ENCODE measurements at regions of chr10 and their contacts with region 1.

Region 1: GRCh38 chr10:32980558-32981468 is 22.8 kb upstream of the ITGB1 start:
- DNase-seq: peak; percentile 96 to 99 (median 98)
- H3K4me3 ChIP-seq: peak overlapping the region; percentile 55 to 77 (median 60)
- H3K4me3 Mint-ChIP-seq: peak overlapping the region; percentile 83 to 98
- H3K27ac ChIP-seq: peak overlapping the region; percentile 83 to 92
- H3K27ac Mint-ChIP-seq: peak overlapping the region; percentile 93 to 98 (median 97)
- H3K4me1 ChIP-seq: peaks cover 24 to 27% of the 10 kb centered on the region in 2 donors
- H3K4me1 Mint-ChIP-seq: peaks cover 44% of the 10 kb centered on the region
- H3K27me3 ChIP-seq: no peaks in the 10 kb centered on the region
- H3K27me3 Mint-ChIP-seq: peaks cover 1 to 7% (median 3%) of the 10 kb centered on the region in 3 donors
- CTCF ChIP-seq: no peak

Region 2: DNA sequence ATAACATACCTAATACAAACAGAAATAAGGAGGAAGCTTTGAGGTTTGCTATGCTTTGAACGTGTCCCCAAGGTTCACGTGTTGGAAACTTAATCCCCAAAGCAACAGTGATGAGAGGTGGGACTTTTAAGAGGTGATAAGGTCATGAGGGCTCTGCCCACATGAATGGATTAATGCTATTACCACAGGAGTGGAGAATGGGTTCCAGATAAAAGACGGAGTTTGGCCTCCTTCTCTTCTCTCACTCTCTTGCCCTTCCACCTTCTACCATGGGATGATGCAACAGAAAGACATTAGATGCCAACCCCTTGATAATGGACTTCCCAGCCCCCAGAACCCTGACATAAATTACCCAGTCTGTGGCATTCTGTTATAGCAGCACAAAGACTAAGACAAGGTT is 32.4 kb before region 1 on chr10:
- intact Hi-C with region 1: loop called in 1 of 2 experiments (anchors 5 kb)
- DNase-seq: no peak
- H3K4me3 ChIP-seq: no peak overlapping the region
- H3K4me3 Mint-ChIP-seq: no peak overlapping the region
- H3K27ac ChIP-seq: no peak overlapping the region
- H3K27ac Mint-ChIP-seq: no peak overlapping the region
- H3K4me1 ChIP-seq: peaks cover 8 to 14% of the 10 kb centered on the region in 2 donors
- H3K4me1 Mint-ChIP-seq: peaks cover 45% of the 10 kb centered on the region
- H3K27me3 ChIP-seq: no peaks in the 10 kb centered on the region
- H3K27me3 Mint-ChIP-seq: no peaks in the 10 kb centered on the region
- CTCF ChIP-seq: no peak

Region 3: DNA sequence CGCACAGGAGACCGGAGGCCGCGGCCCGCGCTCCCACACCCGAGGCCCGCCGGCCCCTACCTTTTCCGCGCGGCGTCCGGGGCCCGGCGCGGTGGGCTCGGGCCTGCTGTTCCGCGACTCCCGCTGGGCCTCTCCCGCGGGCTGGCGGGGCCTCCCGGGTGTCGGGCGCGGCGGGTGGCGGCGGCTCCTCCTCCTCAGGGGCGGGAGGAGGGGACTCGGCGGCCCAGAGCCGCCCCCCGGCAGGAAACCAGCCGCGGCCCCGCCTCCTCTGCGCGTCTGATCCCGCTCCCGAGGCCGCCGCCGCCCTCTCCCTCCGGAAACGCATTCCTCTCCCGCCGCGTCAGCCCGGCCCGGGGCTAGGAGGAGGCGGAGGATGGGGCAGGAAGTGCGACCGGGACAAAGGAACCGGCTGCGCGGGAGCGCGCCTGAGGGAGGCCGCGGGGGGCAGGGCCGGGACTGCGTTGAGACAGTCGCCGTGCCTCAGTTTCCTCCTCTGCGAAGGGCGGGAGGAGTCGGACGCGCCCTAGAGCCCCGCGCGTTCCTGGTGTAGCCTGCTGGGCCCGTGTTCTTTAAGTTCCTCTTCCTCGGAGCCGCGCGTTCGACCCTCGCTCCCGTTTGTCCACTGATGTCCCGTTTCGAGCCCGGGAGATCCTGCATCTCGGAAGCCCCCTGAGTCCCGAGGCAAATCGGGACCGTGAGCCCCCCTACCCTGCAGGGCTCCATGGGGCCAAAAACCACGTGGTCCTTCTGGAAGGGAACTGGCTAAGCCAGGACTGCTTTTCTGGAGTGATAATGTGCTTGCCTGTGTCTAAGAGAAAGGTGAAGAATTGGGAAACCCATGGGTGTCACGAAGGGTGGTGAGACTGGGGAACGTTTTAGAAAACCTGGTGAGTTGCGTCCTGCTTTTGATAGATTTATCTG is 22.5 kb before region 1 on chr10 and contains the start of gene ITGB1:
- intact Hi-C with region 1: loop called in 1 of 2 experiments (anchors 2 kb)
- DNase-seq: peak; percentile 73 to 81 (median 77)
- H3K4me3 ChIP-seq: peak within 1 kb of the TSS; percentile 69 to 93 (median 82)
- H3K4me3 Mint-ChIP-seq: peak within 1 kb of the TSS; percentile 95 to 96
- H3K27ac ChIP-seq: peak within 1 kb of the TSS; percentile 63 to 88
- H3K27ac Mint-ChIP-seq: peak within 1 kb of the TSS; percentile 85 to 97 (median 95)
- H3K4me1 ChIP-seq: peaks cover 35 to 63% of the 10 kb centered on the region in 2 donors
- H3K4me1 Mint-ChIP-seq: peaks cover 67% of the 10 kb centered on the region
- H3K27me3 ChIP-seq: no peaks in the 10 kb centered on the region
- H3K27me3 Mint-ChIP-seq: peaks cover 0 to 3% (median 0%) of the 10 kb centered on the region in 3 donors
- CTCF ChIP-seq: no peak
- polyA plus RNA-seq, gene ITGB1: 58.2 to 157 (median 127) TPM

Measured in CD14-positive monocyte (primary cell).